Naive thymus-derived CD4-positive, alpha-beta T cell (primary cell): ENCODE measurements at regions of chr15 and their contacts with region 1.

Region 1: GRCh38 chr15:85689729-85690128 is 105.0 kb downstream of the KLHL25 start:
- DNase-seq: peak; percentile 44 to 78 (median 71)
- ATAC-seq: peak; percentile 85
- H3K4me3 ChIP-seq: peak overlapping the region; percentile 83
- H3K4me3 Mint-ChIP-seq: peak overlapping the region; percentile 90 to 99 (median 98)
- H3K27ac ChIP-seq: peak overlapping the region; percentile 88
- H3K27ac Mint-ChIP-seq: peak overlapping the region; percentile 92 to 99 (median 98)
- H3K4me1 ChIP-seq: peaks cover 45 to 49% of the 10 kb centered on the region in 2 donors
- H3K4me1 Mint-ChIP-seq: peaks cover 30 to 87% (median 76%) of the 10 kb centered on the region in 7 donors
- H3K27me3 ChIP-seq: no peaks in the 10 kb centered on the region
- H3K27me3 Mint-ChIP-seq: no peaks in the 10 kb centered on the region

Region 2: DNA sequence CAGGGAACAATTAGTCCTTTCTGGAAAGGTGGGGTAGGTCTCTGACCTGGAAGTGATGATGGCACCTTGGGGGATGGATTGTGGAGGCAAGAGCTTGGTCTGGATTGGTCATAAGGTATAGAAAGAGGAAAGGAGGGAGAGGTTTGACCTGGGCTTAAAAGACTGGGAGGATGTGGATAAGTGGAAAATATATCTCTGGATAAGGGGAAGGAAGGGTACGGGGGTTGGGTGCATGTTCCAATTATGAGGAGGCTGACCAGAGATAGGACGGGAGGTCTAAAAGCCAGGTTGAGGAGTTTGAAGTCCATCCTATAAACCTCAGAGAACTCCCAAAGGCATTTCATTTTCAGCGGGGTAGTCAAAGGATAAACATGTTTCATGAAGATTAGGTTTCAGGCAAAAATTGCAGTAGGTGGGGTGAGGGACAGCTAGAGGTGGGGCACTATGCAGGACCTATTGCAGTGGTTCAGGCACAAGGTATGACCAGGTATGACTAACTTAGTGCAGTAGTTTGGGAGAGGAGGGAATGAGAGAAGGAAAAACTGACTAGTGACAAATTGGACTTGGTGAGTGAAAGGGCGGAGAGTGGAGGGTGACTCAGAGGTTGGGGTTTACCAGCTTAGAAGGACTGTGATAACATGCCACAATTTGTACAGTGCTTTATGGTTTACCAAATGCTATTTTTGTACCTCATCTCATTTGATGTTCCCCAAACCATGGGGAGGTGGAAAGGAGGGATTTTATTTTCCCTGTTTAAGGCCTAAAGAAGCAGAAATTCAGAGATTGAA is 697.4 kb before region 1 on chr15:
- CTCF ChIA-PET with region 1: no interaction called
- POLR2A ChIA-PET with region 1: no interaction called
- intact Hi-C with region 1: no loop called
- DNase-seq: peak in 1 of 9 donors; percentile 48
- ATAC-seq: peak; percentile 36
- H3K4me3 ChIP-seq: no peak overlapping the region
- H3K4me3 Mint-ChIP-seq: no peak overlapping the region
- H3K27ac ChIP-seq: no peak overlapping the region
- H3K27ac Mint-ChIP-seq: peak overlapping the region in 4 of 9 donors; percentile 18 to 53 (median 36)
- H3K4me1 ChIP-seq: peaks cover 5 to 27% of the 10 kb centered on the region in 2 donors
- H3K4me1 Mint-ChIP-seq: peaks cover 32 to 63% (median 54%) of the 10 kb centered on the region in 7 donors
- H3K27me3 ChIP-seq: no peaks in the 10 kb centered on the region
- H3K27me3 Mint-ChIP-seq: no peaks in the 10 kb centered on the region

Region 3: DNA sequence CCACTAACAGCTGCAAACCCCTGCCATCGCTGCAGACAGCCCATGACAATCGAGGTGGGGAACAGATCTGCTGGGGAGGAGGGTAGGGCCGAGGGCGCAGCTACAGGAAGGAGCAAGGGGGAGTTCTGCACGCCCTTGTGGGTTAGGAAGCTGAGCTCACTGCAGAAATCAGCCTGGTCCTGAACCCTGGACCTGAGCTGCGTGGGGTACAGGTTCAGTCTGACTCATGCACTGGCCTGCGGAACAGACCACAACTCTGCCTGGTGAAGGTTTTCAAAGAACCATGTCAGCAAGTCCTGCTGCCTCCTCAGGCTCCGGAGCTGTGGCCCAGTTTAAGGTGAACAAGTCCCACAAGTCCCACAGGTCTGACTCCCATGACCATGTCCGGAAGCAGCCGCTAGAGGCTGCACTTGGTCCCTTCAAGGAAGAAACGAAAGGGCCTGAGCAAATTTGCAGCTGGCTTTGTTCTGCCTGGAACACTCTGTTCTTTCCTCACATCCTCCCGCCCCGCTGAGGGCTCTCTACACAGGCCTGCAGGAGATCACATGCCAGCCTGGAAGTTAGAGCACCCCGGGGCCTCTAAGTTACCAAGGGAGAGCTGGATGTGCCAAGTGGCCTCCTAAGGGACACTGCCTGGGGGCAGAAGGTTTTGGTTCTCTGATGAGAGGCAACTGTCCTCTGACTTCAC is 358.7 kb before region 1 on chr15:
- CTCF ChIA-PET with region 1: no interaction called
- POLR2A ChIA-PET with region 1: no interaction called
- intact Hi-C with region 1: loop called in 1 of 2 experiments (anchors 2 kb)
- DNase-seq: peak; percentile 12 to 71 (median 44)
- ATAC-seq: peak; percentile 70
- H3K4me3 ChIP-seq: peak overlapping the region; percentile 57
- H3K4me3 Mint-ChIP-seq: peak overlapping the region; percentile 88 to 100 (median 96)
- H3K27ac ChIP-seq: peak overlapping the region; percentile 65
- H3K27ac Mint-ChIP-seq: peak overlapping the region; percentile 74 to 97 (median 95)
- H3K4me1 ChIP-seq: peaks cover 18 to 24% of the 10 kb centered on the region in 2 donors
- H3K4me1 Mint-ChIP-seq: peaks cover 34 to 54% (median 47%) of the 10 kb centered on the region in 7 donors
- H3K27me3 ChIP-seq: no peaks in the 10 kb centered on the region
- H3K27me3 Mint-ChIP-seq: no peaks in the 10 kb centered on the region

Region 4: GRCh38 chr15:85618956-85619491 is 70.7 kb before region 1 on chr15:
- CTCF ChIA-PET with region 1: no interaction called
- POLR2A ChIA-PET with region 1: interaction called, 6 read pairs
- intact Hi-C with region 1: loop called (anchors 2 kb)
- DNase-seq: peak in 6 of 9 donors; percentile 13 to 68 (median 24)
- ATAC-seq: peak; percentile 77
- H3K4me3 ChIP-seq: peak overlapping the region; percentile 3
- H3K4me3 Mint-ChIP-seq: no peak overlapping the region
- H3K27ac ChIP-seq: peak overlapping the region; percentile 6
- H3K27ac Mint-ChIP-seq: no peak overlapping the region
- H3K4me1 ChIP-seq: peaks cover 29 to 38% of the 10 kb centered on the region in 2 donors
- H3K4me1 Mint-ChIP-seq: peaks cover 14 to 41% (median 26%) of the 10 kb centered on the region in 7 donors
- H3K27me3 ChIP-seq: no peaks in the 10 kb centered on the region
- H3K27me3 Mint-ChIP-seq: no peaks in the 10 kb centered on the region

Region 5: DNA sequence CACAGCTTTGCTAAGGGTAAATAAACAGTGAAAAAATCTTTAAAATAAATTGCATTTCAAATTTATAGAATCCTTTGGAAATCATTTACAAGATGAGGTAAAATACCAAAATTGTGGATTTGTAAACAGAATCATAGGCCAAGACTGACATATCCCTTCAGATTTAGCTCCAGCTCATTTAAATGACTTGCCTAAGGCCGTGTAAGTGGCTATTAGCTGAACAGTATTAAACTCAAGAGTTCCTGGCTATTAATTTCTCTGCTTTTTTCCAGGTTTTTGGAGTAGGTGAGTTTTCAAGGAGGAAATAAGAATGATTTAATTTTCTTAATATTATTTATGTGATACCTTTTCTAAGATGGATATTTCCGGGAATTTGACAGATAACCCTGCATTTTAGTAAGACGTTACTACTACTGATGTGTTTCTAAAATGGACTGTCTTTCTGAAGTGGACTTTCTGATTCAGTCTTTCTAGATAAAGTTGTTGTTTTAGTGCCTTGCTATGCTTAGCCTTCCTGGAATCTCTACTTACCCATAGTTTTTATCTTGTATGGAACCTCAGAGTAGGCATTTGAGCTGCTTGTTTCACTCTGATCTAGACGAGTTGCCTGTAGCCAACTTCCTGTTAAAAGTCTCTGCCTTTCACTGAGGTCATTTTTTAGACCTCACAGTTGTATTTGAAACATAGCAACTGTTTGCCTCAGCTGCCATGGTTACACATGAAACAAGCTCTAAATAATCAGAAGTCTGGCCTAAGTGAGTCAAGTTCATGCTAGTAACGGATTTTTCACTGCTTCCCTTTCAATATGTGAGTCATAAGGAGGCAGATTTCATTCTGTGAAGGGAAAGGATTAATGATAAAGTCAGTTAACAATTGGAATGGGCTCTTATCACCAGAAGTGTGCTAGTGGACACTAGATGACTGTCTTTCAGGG is 22.0 kb before region 1 on chr15:
- CTCF ChIA-PET with region 1: interaction called, 4 read pairs
- POLR2A ChIA-PET with region 1: interaction called, 5 read pairs
- intact Hi-C with region 1: loop called (anchors 1 to 2 kb)
- DNase-seq: peak in 8 of 9 donors; percentile 37 to 78 (median 67)
- ATAC-seq: peak; percentile 96
- H3K4me3 ChIP-seq: no peak overlapping the region
- H3K4me3 Mint-ChIP-seq: peak overlapping the region in 6 of 10 donors; percentile 38 to 60 (median 53)
- H3K27ac ChIP-seq: peak overlapping the region; percentile 65
- H3K27ac Mint-ChIP-seq: peak overlapping the region; percentile 89 to 95 (median 92)
- H3K4me1 ChIP-seq: peaks cover 17% of the 10 kb centered on the region in 2 donors
- H3K4me1 Mint-ChIP-seq: peaks cover 19 to 25% (median 21%) of the 10 kb centered on the region in 7 donors
- H3K27me3 ChIP-seq: no peaks in the 10 kb centered on the region
- H3K27me3 Mint-ChIP-seq: no peaks in the 10 kb centered on the region

Region 6: DNA sequence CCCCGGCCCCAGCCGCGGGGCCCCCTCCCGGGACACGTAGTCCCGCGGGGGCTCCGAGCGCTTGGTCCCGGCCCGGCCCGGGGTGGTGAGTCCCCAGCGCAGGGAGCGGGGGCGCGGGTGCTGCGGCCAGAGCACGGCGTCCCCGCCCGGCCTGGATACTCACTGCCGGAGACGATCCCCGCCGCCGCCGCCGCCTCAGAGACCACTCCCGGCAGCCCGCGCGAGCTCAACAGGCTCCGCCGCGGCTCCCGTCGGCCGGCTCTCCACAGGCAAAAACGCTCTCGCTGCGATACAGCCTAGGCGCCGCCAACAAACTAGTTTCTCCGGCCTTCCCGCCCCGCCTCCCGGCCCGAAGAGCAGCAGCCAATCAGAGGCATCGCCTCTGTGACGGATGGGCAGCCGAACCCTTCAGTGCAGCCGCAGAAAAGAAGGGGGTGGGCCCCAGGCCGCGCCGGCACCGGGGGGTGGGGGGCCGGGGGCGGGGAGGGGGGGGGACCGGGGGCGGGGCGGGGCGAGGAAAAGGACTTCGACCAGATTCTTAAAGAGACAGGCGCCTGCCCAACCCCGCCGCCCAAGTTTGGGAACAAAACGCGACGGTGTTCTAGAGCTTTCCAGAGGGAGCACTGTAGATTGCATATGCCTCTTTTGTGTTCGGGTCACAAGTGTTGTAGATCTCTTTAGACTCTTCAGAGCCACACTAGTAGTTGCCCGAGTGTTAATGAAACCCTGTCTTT is 105.0 kb after region 1 on chr15 and contains the start of gene KLHL25:
- CTCF ChIA-PET with region 1: no interaction called
- POLR2A ChIA-PET with region 1: interaction called, 4 read pairs
- intact Hi-C with region 1: loop called (anchors 1 kb)
- DNase-seq: peak; percentile 77 to 93 (median 91)
- ATAC-seq: peak; percentile 99
- H3K4me3 ChIP-seq: peak within 1 kb of the TSS; percentile 66
- H3K4me3 Mint-ChIP-seq: peak within 1 kb of the TSS; percentile 85 to 96 (median 94)
- H3K27ac ChIP-seq: peak within 1 kb of the TSS; percentile 84
- H3K27ac Mint-ChIP-seq: peak within 1 kb of the TSS; percentile 77 to 91 (median 86)
- H3K4me1 ChIP-seq: peaks cover 22 to 28% of the 10 kb centered on the region in 2 donors
- H3K4me1 Mint-ChIP-seq: peaks cover 26 to 49% (median 44%) of the 10 kb centered on the region in 7 donors
- H3K27me3 ChIP-seq: no peaks in the 10 kb centered on the region
- H3K27me3 Mint-ChIP-seq: peaks cover 0 to 3% (median 0%) of the 10 kb centered on the region in 5 donors
- total RNA-seq, gene KLHL25: 5.5 to 13.1 (median 10.6) TPM